Psoas muscle (tissue), 8 donors: ENCODE measurements at regions of chr13 and their contacts with region 1.

Region 1: GRCh38 chr13:39263033-39263432 is 224.8 kb downstream of the NHLRC3 start:
- DNase-seq: peak in 1 of 2 donors; percentile 13
- ATAC-seq: peak in 3 of 4 donors; percentile 69 to 73 (median 70)
- H3K4me3 ChIP-seq: no peak overlapping the region
- H3K27ac ChIP-seq: no peak overlapping the region
- H3K4me1 ChIP-seq: peaks cover 16% of the 10 kb centered on the region
- H3K27me3 ChIP-seq: no peaks in the 10 kb centered on the region
- CTCF ChIP-seq: peak; percentile 62

Region 2: GRCh38 chr13:37701972-37702371 is 1561.1 kb before region 1 on chr13:
- intact Hi-C with region 1: no loop called
- DNase-seq: no peak
- ATAC-seq: no peak
- H3K4me3 ChIP-seq: no peak overlapping the region
- H3K27ac ChIP-seq: no peak overlapping the region
- H3K4me1 ChIP-seq: no peaks in the 10 kb centered on the region
- H3K27me3 ChIP-seq: no peaks in the 10 kb centered on the region
- CTCF ChIP-seq: no peak

Region 3: GRCh38 chr13:39037880-39038568 is 225.0 kb before region 1 on chr13 and contains the starts of genes NHLRC3 and PROSER1:
- intact Hi-C with region 1: loop called in 1 of 2 experiments (anchors 10 kb)
- DNase-seq: peak; percentile 92 to 97
- ATAC-seq: peak; percentile 93 to 96 (median 96)
- H3K4me3 ChIP-seq: peak within 1 kb of the TSS; percentile 95
- H3K27ac ChIP-seq: peak within 1 kb of the TSS; percentile 85
- H3K4me1 ChIP-seq: peaks cover 31% of the 10 kb centered on the region
- H3K27me3 ChIP-seq: no peaks in the 10 kb centered on the region
- CTCF ChIP-seq: no peak
- total RNA-seq, gene NHLRC3: 7.2 to 10.1 (median 8.1) TPM
- total RNA-seq, gene PROSER1: 13.3 to 19.2 (median 15.1) TPM

Region 4: DNA sequence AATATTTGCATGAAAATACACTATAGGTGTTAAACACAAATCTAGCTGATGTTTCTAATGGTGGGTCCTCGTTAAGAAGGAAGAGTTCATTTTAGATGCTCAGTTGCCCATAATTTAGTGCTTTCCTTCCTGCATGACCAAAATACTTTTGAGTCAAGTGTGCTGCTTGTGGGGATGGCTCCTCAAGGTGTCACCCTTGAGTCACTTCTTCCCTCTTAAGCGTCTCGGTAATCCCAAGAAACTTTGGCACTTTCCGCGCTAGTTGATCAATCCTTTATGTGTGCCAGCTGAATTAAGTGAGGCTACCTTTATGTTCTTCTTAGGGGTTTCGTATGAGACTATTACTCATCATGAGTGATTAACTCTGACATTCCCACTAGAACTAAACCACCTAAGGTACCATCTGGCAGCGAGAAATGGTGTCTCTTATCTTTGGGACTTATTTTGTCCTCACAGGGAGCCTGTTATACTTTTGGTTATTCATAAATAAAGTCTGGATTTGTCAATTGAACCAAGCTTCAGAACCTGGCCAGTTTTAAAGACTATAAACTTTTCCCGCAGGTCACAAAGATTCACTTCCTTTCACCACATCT is 118.0 kb before region 1 on chr13:
- intact Hi-C with region 1: loop called (anchors 2 to 10 kb)
- DNase-seq: peak; percentile 39 to 56
- ATAC-seq: peak in 3 of 4 donors; percentile 42 to 74 (median 71)
- H3K4me3 ChIP-seq: peak overlapping the region; percentile 12
- H3K27ac ChIP-seq: no peak overlapping the region
- H3K4me1 ChIP-seq: no peaks in the 10 kb centered on the region
- H3K27me3 ChIP-seq: no peaks in the 10 kb centered on the region
- CTCF ChIP-seq: peak; percentile 68

Region 5: GRCh38 chr13:39326469-39327171 is 63.6 kb after region 1 on chr13:
- intact Hi-C with region 1: no loop called
- DNase-seq: no peak
- ATAC-seq: no peak
- H3K4me3 ChIP-seq: no peak overlapping the region
- H3K27ac ChIP-seq: no peak overlapping the region
- H3K4me1 ChIP-seq: no peaks in the 10 kb centered on the region
- H3K27me3 ChIP-seq: no peaks in the 10 kb centered on the region
- CTCF ChIP-seq: no peak

Region 6: GRCh38 chr13:39688699-39689405 is 425.8 kb after region 1 on chr13:
- intact Hi-C with region 1: no loop called
- DNase-seq: no peak
- ATAC-seq: no peak
- H3K4me3 ChIP-seq: no peak overlapping the region
- H3K27ac ChIP-seq: no peak overlapping the region
- H3K4me1 ChIP-seq: no peaks in the 10 kb centered on the region
- H3K27me3 ChIP-seq: no peaks in the 10 kb centered on the region
- CTCF ChIP-seq: no peak

Region 7: GRCh38 chr13:39892721-39893685 is 630.0 kb after region 1 on chr13:
- intact Hi-C with region 1: no loop called
- DNase-seq: no peak
- ATAC-seq: no peak
- H3K4me3 ChIP-seq: no peak overlapping the region
- H3K27ac ChIP-seq: no peak overlapping the region
- H3K4me1 ChIP-seq: no peaks in the 10 kb centered on the region
- H3K27me3 ChIP-seq: no peaks in the 10 kb centered on the region
- CTCF ChIP-seq: no peak